H1 (cell line): ENCODE measurements at regions of chr15 and their contacts with region 1.

Region 1: GRCh38 chr15:31977812-31978661 is 52.3 kb upstream of the CHRNA7 start:
- DNase-seq: peak in 1 of 2 experiments; percentile 92
- H3K4me3 ChIP-seq: peak overlapping the region in 1 of 4 experiments; percentile 27; a peak in 1 of 8 replicates
- H3K27ac ChIP-seq: no peak overlapping the region
- H3K4me1 ChIP-seq: peaks cover 0 to 12% (median 4%) of the 10 kb centered on the region in 4 experiments; a peak in 5 of 7 replicates
- H3K27me3 ChIP-seq: peaks cover 0 to 13% (median 1%) of the 10 kb centered on the region in 4 experiments; a peak in 4 of 7 replicates
- CTCF ChIP-seq: peak; percentile 92 to 96 (median 93)
- EP300 ChIP-seq: peak in 1 of 2 experiments; percentile 24; a peak in 1 of 3 replicates
- POLR2A ChIP-seq: no peak
- RAD21 ChIP-seq: peak; percentile 85 to 92

Region 2: DNA sequence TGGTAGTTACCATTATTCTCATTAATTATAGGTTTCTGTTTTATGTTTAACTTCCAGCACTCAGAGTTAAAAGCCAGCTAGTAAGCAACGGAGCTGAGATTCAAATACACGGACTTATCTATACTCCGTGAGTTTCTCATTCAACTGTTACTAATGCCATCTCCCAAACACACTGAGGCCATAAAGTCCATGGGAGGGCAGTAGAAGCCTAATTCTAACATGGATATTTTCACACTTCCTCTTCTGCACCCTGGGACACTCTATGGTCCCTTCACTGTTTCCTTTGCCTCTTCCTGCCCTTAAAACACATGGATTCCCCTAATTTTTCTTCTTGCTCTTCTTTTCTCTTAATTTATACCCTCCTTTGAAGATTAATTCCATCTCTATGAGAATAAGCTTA is 406.4 kb before region 1 on chr15:
- CTCF ChIA-PET with region 1: interaction called, 10 read pairs
- POLR2A ChIA-PET with region 1: no interaction called
- DNase-seq: no peak
- H3K4me3 ChIP-seq: no peak overlapping the region
- H3K27ac ChIP-seq: no peak overlapping the region
- H3K4me1 ChIP-seq: peaks cover 0 to 4% (median 0%) of the 10 kb centered on the region in 4 experiments; a peak in 3 of 7 replicates
- H3K27me3 ChIP-seq: no peaks in the 10 kb centered on the region
- CTCF ChIP-seq: peak in 2 of 3 experiments; percentile 22 to 36; a peak in 2 of 4 replicates
- EP300 ChIP-seq: no peak
- POLR2A ChIP-seq: no peak
- RAD21 ChIP-seq: peak; percentile 44 to 49; a peak in 3 of 4 replicates

Region 3: GRCh38 chr15:31792611-31793385 is 185.2 kb before region 1 on chr15:
- CTCF ChIA-PET with region 1: no interaction called
- POLR2A ChIA-PET with region 1: no interaction called
- DNase-seq: no peak
- H3K4me3 ChIP-seq: no peak overlapping the region
- H3K27ac ChIP-seq: no peak overlapping the region
- H3K4me1 ChIP-seq: peaks cover 0 to 3% (median 0%) of the 10 kb centered on the region in 4 experiments; a peak in 1 of 7 replicates
- H3K27me3 ChIP-seq: no peaks in the 10 kb centered on the region
- CTCF ChIP-seq: no peak
- EP300 ChIP-seq: no peak
- POLR2A ChIP-seq: no peak
- RAD21 ChIP-seq: no peak

Region 4: GRCh38 chr15:31887246-31887645 is 90.8 kb before region 1 on chr15:
- CTCF ChIA-PET with region 1: interaction called, 16 read pairs
- POLR2A ChIA-PET with region 1: no interaction called
- DNase-seq: no peak
- H3K4me3 ChIP-seq: no peak overlapping the region
- H3K27ac ChIP-seq: no peak overlapping the region
- H3K4me1 ChIP-seq: no peaks in the 10 kb centered on the region
- H3K27me3 ChIP-seq: 0 out of 7 replicates have a peak, but pooled peaks cover 0 to 2% (median under 1%) of the 10 kb centered on the region in 4 experiments
- CTCF ChIP-seq: peak; percentile 54 to 62 (median 59); a peak in 3 of 4 replicates
- EP300 ChIP-seq: no peak
- POLR2A ChIP-seq: no peak
- RAD21 ChIP-seq: peak; percentile 56 to 63

Region 5: DNA sequence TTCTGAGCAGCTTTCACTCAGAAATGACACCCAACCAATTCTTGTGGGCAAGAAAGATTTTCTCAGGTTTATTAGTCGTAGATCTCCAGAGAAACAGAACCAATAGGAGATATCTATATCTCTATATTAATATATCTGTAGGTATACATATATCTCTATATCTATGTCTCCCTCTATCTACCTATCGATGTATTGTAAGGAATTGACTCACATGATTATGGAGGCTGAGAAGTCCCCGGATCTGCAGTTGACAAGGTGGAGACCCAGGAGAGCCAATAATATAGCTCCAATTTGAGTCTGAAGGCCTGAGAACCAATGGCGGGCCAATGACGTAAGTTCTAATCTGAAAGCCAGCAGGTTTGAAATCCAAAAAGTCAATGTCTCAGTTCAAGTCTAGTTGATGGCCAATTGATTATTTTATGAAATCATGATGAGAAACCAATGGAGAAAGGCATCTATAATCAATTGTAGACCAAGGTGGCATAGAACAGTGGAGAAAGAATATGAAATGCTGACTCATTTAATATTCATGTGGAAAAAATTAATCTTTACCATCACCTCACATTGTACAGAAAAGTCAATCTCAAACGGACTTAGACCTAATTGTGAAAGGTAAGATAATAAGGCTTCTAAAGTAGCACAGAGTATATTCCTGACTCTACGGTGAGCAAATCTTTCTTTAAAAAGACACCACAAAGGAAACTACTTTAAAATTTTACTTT is 13.3 kb before region 1 on chr15:
- CTCF ChIA-PET with region 1: interaction called, 19 read pairs
- POLR2A ChIA-PET with region 1: no interaction called
- DNase-seq: no peak
- H3K4me3 ChIP-seq: no peak overlapping the region
- H3K27ac ChIP-seq: no peak overlapping the region
- H3K4me1 ChIP-seq: no peaks in the 10 kb centered on the region
- H3K27me3 ChIP-seq: no peaks in the 10 kb centered on the region; a peak in 1 of 7 replicates
- CTCF ChIP-seq: no peak
- EP300 ChIP-seq: no peak
- POLR2A ChIP-seq: no peak
- RAD21 ChIP-seq: no peak

Region 6: GRCh38 chr15:32029862-32030781 is 52.1 kb after region 1 on chr15 and contains the start of gene CHRNA7:
- CTCF ChIA-PET with region 1: interaction called, 52 read pairs
- POLR2A ChIA-PET with region 1: interaction called, 3 read pairs
- DNase-seq: peak in 1 of 2 experiments; percentile 78
- H3K4me3 ChIP-seq: peak within 1 kb of the TSS; percentile 76 to 87 (median 83)
- H3K27ac ChIP-seq: no peak within 1 kb of the TSS
- H3K4me1 ChIP-seq: peaks cover 0 to 3% (median 0%) of the 10 kb centered on the region in 4 experiments; a peak in 2 of 7 replicates
- H3K27me3 ChIP-seq: peaks cover 0 to 15% (median 8%) of the 10 kb centered on the region in 4 experiments; a peak in 3 of 7 replicates
- CTCF ChIP-seq: peak; percentile 22 to 54 (median 25); a peak in 2 of 4 replicates
- EP300 ChIP-seq: no peak
- POLR2A ChIP-seq: peak; percentile 91 to 95
- RAD21 ChIP-seq: no peak
- total RNA-seq, gene CHRNA7: 7.5 and 9.1 TPM in 2 replicates

Region 7: GRCh38 chr15:32152574-32152973 is 174.5 kb after region 1 on chr15:
- CTCF ChIA-PET with region 1: interaction called, 12 read pairs
- POLR2A ChIA-PET with region 1: no interaction called
- DNase-seq: no peak
- H3K4me3 ChIP-seq: no peak overlapping the region
- H3K27ac ChIP-seq: no peak overlapping the region
- H3K4me1 ChIP-seq: peaks cover 0 to 6% (median 0%) of the 10 kb centered on the region in 4 experiments; a peak in 1 of 7 replicates
- H3K27me3 ChIP-seq: no peaks in the 10 kb centered on the region
- CTCF ChIP-seq: no peak
- EP300 ChIP-seq: no peak
- POLR2A ChIP-seq: no peak
- RAD21 ChIP-seq: no peak